ENCODE measurements at regions of chr16 and their contacts with region 1.

Region 1: DNA sequence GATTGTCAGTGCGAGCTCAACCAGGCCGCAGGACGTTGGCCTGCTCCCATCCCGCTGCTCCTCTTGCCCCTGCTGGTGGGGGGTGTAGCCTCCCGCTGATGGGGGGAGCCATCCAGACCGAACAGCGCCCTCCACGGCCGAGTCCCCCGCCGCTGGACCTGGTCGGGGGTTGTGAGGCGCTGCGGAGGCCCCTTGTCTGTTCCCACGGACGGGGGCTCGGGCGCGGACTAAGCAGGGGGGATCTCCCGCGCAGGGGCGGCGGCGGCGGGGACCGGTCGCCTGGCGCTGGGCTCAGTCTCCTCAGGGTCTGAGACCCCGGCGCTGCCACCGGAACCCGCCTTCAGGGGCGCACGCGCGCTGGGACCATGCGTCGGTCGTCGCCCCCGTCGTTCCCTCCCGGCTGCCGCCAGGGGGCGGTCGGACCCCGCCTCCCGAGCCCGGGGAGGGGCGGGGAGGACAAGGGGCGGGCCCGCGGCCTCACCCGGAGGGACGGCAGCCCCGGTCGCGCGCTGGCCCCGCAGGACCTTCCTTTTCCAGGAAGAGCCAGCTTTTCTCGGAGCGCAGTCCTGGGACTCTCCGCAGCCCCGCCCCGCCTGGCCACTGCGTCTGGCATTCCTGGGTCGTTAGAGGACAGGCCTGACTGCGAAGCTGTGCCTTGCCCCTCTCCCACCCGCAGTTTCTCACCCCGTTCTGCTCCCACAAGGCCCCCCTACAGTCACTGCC is 6.3 kb upstream of the IL32 start:
- DNase-seq: peak; percentile 70 to 95 (median 86)
- ATAC-seq: peak; percentile 88
- H3K4me3 ChIP-seq: peak overlapping the region; percentile 87
- H3K4me3 Mint-ChIP-seq: peak overlapping the region; percentile 95
- H3K27ac ChIP-seq: peak overlapping the region; percentile 72 to 74
- H3K27ac Mint-ChIP-seq: peak overlapping the region; percentile 83
- H3K4me1 ChIP-seq: peaks cover 84% of the 10 kb centered on the region
- H3K4me1 Mint-ChIP-seq: peaks cover 60% of the 10 kb centered on the region
- H3K27me3 ChIP-seq: no peaks in the 10 kb centered on the region
- H3K27me3 Mint-ChIP-seq: no peaks in the 10 kb centered on the region
- CTCF ChIP-seq: peak; percentile 88

Region 2: DNA sequence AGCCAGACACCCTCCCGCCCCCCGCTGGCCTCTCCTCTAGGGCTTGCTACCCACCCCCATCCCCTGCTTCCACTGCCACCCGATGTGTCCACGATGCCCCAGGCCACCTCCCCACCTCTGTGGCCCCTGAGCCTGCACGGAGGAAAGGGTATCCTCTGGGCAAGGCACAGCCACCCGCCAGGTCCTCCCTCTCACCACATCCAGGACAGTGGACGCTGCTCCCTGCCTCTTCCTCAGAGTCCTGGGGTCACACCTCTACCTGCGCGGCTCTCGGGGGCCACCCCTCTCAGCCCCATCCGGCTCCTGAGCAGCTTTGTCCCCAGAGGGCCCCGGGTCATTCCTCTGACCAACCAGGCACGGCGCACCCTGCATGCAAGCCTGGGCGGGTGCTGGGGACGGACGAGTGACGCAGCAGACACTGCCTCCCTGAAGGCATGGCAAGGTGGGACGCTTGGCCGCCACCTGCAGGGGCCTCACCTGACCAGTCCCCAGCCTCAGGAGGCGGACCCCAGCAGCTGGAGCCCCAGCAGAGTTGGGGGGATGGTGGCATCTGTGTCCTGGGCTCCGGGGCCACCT is 122.6 kb before region 1 on chr16:
- CTCF ChIA-PET with region 1: no interaction called
- POLR2A ChIA-PET with region 1: no interaction called
- intact Hi-C with region 1: no loop called
- DNase-seq: no peak
- ATAC-seq: no peak
- H3K4me3 ChIP-seq: no peak overlapping the region
- H3K4me3 Mint-ChIP-seq: no peak overlapping the region
- H3K27ac ChIP-seq: no peak overlapping the region
- H3K27ac Mint-ChIP-seq: no peak overlapping the region
- H3K4me1 ChIP-seq: no peaks in the 10 kb centered on the region
- H3K4me1 Mint-ChIP-seq: no peaks in the 10 kb centered on the region
- H3K27me3 ChIP-seq: no peaks in the 10 kb centered on the region
- H3K27me3 Mint-ChIP-seq: no peaks in the 10 kb centered on the region
- CTCF ChIP-seq: no peak

Region 3: GRCh38 chr16:2980227-2981086 is 78.7 kb before region 1 on chr16 and contains the start of gene PKMYT1:
- CTCF ChIA-PET with region 1: no interaction called
- POLR2A ChIA-PET with region 1: no interaction called
- intact Hi-C with region 1: no loop called
- DNase-seq: peak; percentile 86 to 98 (median 94)
- ATAC-seq: peak; percentile 95
- H3K4me3 ChIP-seq: peak within 1 kb of the TSS; percentile 93
- H3K4me3 Mint-ChIP-seq: peak within 1 kb of the TSS; percentile 82
- H3K27ac ChIP-seq: peak within 1 kb of the TSS; percentile 50 to 73
- H3K27ac Mint-ChIP-seq: peak within 1 kb of the TSS; percentile 49
- H3K4me1 ChIP-seq: peaks cover 29% of the 10 kb centered on the region
- H3K4me1 Mint-ChIP-seq: no peaks in the 10 kb centered on the region
- H3K27me3 ChIP-seq: peaks cover 0 to 3% of the 10 kb centered on the region in 2 experiments
- H3K27me3 Mint-ChIP-seq: no peaks in the 10 kb centered on the region
- CTCF ChIP-seq: no peak
- total RNA-seq, gene PKMYT1: 0.47 to 0.60 TPM

Region 4: GRCh38 chr16:3023669-3024478 is 35.3 kb before region 1 on chr16 and contains the starts of genes HCFC1R1 and THOC6:
- CTCF ChIA-PET with region 1: interaction called, 13 read pairs
- POLR2A ChIA-PET with region 1: interaction called, 5 read pairs
- intact Hi-C with region 1: no loop called
- DNase-seq: peak; percentile 90 to 99 (median 95)
- ATAC-seq: peak; percentile 76
- H3K4me3 ChIP-seq: peak within 1 kb of the TSS; percentile 78
- H3K4me3 Mint-ChIP-seq: peak within 1 kb of the TSS; percentile 66
- H3K27ac ChIP-seq: peak within 1 kb of the TSS; percentile 80 to 96
- H3K27ac Mint-ChIP-seq: peak within 1 kb of the TSS; percentile 78
- H3K4me1 ChIP-seq: peaks cover 77% of the 10 kb centered on the region
- H3K4me1 Mint-ChIP-seq: peaks cover 51% of the 10 kb centered on the region
- H3K27me3 ChIP-seq: peaks cover 0 to 4% of the 10 kb centered on the region in 2 experiments
- H3K27me3 Mint-ChIP-seq: peaks cover 1% of the 10 kb centered on the region
- CTCF ChIP-seq: no peak
- total RNA-seq, gene HCFC1R1: 8.9 to 11.0 TPM
- total RNA-seq, gene THOC6: 12.0 to 12.9 TPM

Region 5: GRCh38 chr16:3087243-3088235 is 28.4 kb after region 1 on chr16:
- CTCF ChIA-PET with region 1: interaction called, 10 read pairs
- POLR2A ChIA-PET with region 1: no interaction called
- intact Hi-C with region 1: no loop called
- DNase-seq: no peak
- ATAC-seq: no peak
- H3K4me3 ChIP-seq: peak overlapping the region; percentile 44
- H3K4me3 Mint-ChIP-seq: peak overlapping the region; percentile 42
- H3K27ac ChIP-seq: peak overlapping the region; percentile 10 to 22
- H3K27ac Mint-ChIP-seq: peak overlapping the region; percentile 48
- H3K4me1 ChIP-seq: peaks cover 63% of the 10 kb centered on the region
- H3K4me1 Mint-ChIP-seq: peaks cover 57% of the 10 kb centered on the region
- H3K27me3 ChIP-seq: no peaks in the 10 kb centered on the region
- H3K27me3 Mint-ChIP-seq: no peaks in the 10 kb centered on the region
- CTCF ChIP-seq: no peak

Region 6: GRCh38 chr16:3099732-3100499 is 40.8 kb after region 1 on chr16:
- CTCF ChIA-PET with region 1: interaction called, 15 read pairs
- POLR2A ChIA-PET with region 1: interaction called, 6 read pairs
- intact Hi-C with region 1: loop called in 1 of 2 experiments (anchors 2 kb)
- DNase-seq: peak; percentile 78 to 97 (median 88)
- ATAC-seq: peak; percentile 82
- H3K4me3 ChIP-seq: peak overlapping the region; percentile 48
- H3K4me3 Mint-ChIP-seq: peak overlapping the region; percentile 82
- H3K27ac ChIP-seq: peak overlapping the region in 1 of 2 donors; percentile 18
- H3K27ac Mint-ChIP-seq: peak overlapping the region; percentile 68
- H3K4me1 ChIP-seq: peaks cover 49% of the 10 kb centered on the region
- H3K4me1 Mint-ChIP-seq: peaks cover 71% of the 10 kb centered on the region
- H3K27me3 ChIP-seq: no peaks in the 10 kb centered on the region
- H3K27me3 Mint-ChIP-seq: no peaks in the 10 kb centered on the region
- CTCF ChIP-seq: no peak

Region 7: DNA sequence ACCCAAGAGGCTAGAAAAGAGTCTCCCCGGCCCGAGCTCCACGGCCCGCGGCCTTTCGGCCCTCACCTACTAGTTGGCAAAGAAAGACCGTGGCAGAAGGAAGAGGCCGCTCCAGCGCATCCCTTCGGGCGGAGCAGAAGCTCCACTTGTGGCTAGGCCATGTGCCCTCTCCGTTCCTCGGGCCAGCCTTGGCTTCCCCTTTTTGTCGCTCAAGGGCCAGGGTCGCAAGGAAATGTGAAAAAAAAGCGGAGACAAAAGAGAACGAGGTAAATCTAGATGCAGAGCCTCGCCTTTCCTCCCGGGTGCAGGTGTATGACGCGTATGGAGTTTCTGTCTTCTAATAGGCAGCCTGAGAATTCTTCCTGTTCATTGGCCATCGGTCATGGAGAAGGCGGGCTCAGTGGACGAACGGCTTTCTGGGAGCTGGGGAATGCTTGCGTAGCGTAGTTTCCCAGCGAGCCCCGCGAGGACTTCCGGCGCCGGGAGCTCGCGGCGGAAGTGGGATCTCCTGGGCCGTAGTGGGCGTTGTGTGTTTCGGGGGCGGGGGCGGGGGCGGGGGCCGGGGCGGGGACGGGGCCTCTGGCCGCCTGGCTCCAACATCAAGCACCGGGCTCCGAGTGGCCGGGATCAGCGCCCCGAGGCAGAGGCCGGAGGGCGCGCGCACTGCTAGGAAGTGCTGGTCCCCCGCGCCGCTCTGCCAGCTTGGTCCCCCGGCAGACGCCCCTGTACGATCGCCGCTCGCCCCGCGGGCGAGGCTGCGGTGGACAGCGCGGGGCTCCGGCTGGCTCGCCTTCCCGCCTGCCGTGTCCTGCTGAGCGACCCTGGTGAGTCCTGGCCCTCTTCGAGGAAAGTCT is 75.6 kb after region 1 on chr16 and contains the start of gene ZNF213:
- CTCF ChIA-PET with region 1: interaction called, 62 read pairs
- POLR2A ChIA-PET with region 1: interaction called, 70 read pairs
- intact Hi-C with region 1: loop called (anchors 1 kb)
- DNase-seq: peak; percentile 79 to 99 (median 89)
- ATAC-seq: peak; percentile 97
- H3K4me3 ChIP-seq: peak within 1 kb of the TSS; percentile 84
- H3K4me3 Mint-ChIP-seq: peak within 1 kb of the TSS; percentile 99
- H3K27ac ChIP-seq: peak within 1 kb of the TSS; percentile 91 to 92
- H3K27ac Mint-ChIP-seq: peak within 1 kb of the TSS; percentile 94
- H3K4me1 ChIP-seq: peaks cover 29% of the 10 kb centered on the region
- H3K4me1 Mint-ChIP-seq: peaks cover 38% of the 10 kb centered on the region
- H3K27me3 ChIP-seq: no peaks in the 10 kb centered on the region
- H3K27me3 Mint-ChIP-seq: no peaks in the 10 kb centered on the region
- CTCF ChIP-seq: no peak
- total RNA-seq, gene ZNF213: 1.6 to 2.2 TPM

Measured in CD4-positive, alpha-beta T cell (primary cell).